Left cardiac atrium (tissue), 4 donors: ENCODE measurements at regions of chr1 and their contacts with region 1.

Region 1: DNA sequence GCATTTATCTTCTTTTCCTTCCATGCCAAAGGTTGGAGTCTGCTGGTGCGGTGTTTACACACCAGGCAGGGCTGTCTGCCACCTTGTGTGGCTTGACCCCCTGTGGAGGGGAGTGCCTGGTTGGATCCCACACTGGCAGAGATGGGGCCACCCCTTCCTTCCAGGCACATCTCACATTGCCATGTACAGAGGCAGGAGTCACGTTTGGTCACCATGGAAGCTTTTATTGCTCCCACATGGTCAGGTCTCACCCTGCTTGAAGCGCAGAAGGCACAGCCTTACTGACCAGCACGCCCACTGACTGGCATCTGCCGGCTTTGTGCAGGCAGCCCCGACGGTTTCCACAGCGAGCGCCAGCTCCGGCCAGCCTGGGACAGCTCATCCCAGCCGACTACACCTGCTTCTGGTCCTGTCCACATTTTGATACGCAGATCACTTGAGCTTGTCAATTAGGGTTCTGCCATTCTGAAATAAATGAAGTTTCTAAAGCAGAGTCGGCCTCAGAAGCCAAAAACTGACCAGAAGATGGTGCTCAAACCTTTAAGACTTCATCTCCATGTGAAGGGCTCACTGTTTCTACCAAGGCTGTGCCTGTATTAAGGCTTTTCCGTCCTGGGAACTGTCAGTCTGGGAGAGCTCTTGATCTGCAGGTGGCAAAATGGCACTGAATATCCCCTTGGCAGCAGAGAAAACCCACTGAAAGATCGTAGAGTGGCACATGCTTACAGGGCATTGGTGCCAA is 35.6 kb upstream of the EPHA8 start:
- DNase-seq: no peak
- ATAC-seq: no peak

Region 2: DNA sequence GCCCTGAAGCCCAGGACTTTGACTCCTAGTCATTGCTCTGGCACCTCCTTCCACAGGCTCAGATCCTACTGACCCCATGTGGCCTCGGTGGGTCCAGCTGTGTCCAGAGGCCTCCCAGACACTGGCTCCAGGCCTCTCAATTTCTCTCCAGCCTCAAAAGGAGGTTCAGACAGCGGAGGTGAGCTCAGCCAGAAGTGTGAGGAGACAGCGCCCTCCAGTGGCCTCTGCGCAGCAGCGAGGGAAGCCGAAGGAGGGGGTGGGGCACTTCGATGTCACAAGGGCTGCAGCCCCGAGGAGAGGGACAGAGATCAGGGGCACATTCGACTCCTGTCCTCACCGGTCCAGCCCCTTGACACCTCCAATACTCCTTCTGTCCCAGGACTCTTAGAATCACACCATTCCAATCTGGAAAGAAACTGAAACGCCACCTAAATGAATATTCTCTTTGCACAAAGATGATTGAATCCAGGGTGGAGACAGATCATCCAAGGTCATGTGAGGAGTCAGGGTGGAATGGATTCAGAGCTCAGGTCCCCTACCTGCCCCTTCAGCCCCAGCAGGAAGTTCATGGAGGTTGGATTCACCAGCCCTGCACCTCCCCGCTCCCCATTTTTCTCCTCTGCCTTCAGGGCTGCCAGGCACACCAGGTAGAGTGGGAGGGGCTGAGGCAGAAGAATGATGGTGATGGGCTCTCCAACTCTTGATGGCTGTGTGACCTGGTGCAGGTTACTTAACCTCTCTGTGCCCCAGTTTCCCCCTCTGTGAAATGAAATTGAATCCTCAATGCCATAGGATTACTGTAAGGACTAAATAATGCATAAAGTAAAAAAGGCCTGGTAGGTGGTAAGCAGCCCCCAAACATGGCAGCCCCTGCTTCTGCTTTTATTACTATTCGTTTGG is 110.9 kb before region 1 on chr1:
- intact Hi-C with region 1: loop called (anchors 10 kb)
- DNase-seq: peak; percentile 67
- ATAC-seq: peak; percentile 47 to 59

Region 3: GRCh38 chr1:22575532-22576149 is 47.9 kb after region 1 on chr1:
- intact Hi-C with region 1: no loop called
- DNase-seq: no peak
- ATAC-seq: peak; percentile 25 to 54

Region 4: GRCh38 chr1:22704440-22705067 is 176.8 kb after region 1 on chr1:
- intact Hi-C with region 1: no loop called
- DNase-seq: peak; percentile 87
- ATAC-seq: peak; percentile 92 to 93